Activated B cell treated with CpG ODN at 0.5 μM for 24 hours (primary cell): ENCODE measurements at regions of chr12 and their contacts with region 1.

Region 1: DNA sequence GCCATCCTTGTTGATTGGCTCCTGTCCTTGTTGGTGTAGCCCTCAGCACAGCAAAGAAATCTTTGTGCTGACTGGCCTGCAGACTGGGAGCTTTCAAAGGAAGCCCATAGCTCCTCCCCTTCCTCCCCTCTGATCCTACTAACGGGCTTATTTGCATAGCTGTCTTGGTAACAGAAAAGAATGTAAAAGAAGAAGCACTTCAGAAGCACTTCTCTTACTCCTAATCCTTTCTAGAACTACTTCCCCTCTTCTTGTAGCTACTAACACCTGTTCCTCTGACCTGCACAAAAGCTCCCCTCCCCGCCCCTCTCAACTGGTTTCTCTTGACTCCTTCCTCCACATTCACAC is 14.3 kb upstream of the RIC8B start:
- DNase-seq: no peak
- ATAC-seq: peak; percentile 99
- H3K4me3 Mint-ChIP-seq: peak overlapping the region; percentile 70
- H3K27ac Mint-ChIP-seq: peak overlapping the region; percentile 88
- H3K4me1 Mint-ChIP-seq: peaks cover 24% of the 10 kb centered on the region
- H3K27me3 Mint-ChIP-seq: no peaks in the 10 kb centered on the region
- CTCF ChIP-seq: no peak

Region 2: GRCh38 chr12:106747973-106748436 is 12.2 kb before region 1 on chr12:
- CTCF ChIA-PET with region 1: no interaction called
- POLR2A ChIA-PET with region 1: no interaction called
- intact Hi-C with region 1: loop called (anchors 2 kb)
- DNase-seq: no peak
- ATAC-seq: peak; percentile 14
- H3K4me3 Mint-ChIP-seq: no peak overlapping the region
- H3K27ac Mint-ChIP-seq: no peak overlapping the region
- H3K4me1 Mint-ChIP-seq: peaks cover 14% of the 10 kb centered on the region
- H3K27me3 Mint-ChIP-seq: peaks cover 16% of the 10 kb centered on the region
- CTCF ChIP-seq: no peak

Region 3: DNA sequence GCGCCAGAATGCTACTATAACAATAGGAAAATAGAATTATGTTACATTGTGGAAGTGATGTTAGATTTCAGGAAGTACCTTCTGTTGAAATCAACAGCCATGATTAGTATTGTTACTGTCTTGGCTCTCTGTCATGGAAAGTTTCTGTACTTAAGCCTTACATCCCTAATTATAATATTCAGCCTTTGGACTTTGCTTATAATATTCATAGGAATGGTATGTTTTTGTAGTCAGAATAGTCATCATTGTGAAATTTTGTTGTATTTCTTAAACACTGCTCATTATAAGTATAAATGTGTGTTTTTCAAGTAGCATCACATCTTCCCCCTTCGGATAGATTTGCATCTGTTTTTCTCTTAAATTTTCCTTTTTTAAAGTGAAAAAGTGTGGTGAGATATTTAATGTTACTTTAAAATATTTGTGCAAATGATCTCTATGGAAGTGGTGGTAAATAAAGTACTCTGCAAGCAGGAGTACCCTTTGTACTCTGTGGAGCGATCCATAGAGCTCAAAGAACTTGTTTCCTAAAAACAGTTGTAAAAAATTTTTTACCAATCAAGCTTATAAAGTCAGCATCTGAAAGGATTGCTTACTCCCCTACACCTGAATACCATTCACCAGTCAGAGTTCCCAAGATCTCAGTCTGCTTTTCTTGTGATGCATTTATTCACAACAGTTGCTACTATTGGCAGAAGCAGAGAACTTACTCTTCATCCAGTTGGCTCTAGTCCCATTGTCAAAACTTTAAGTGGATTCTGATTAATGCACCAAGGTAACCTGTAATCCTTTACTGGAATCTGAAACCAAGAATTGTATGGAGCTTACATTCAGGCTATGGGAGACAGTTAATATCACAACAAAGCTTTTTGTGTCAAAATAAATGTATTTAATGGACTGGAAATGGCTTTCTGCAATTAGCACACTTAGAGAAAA is 102.1 kb after region 1 on chr12:
- CTCF ChIA-PET with region 1: no interaction called
- POLR2A ChIA-PET with region 1: no interaction called
- intact Hi-C with region 1: no loop called
- DNase-seq: no peak
- ATAC-seq: no peak
- H3K4me3 Mint-ChIP-seq: no peak overlapping the region
- H3K27ac Mint-ChIP-seq: no peak overlapping the region
- H3K4me1 Mint-ChIP-seq: no peaks in the 10 kb centered on the region
- H3K27me3 Mint-ChIP-seq: peaks cover 6% of the 10 kb centered on the region
- CTCF ChIP-seq: no peak